Activated naive CD4-positive, alpha-beta T cell treated with anti-CD3 and anti-CD28 coated beads, Interleukin-2, amount 10 ng/mL, durations not matched to agents 7 days and 5 days (primary cell): ENCODE measurements at regions of chr1 and their contacts with region 1.

Region 1: GRCh38 chr1:161763522-161764098 is 2.5 kb upstream of the ATF6 start:
- DNase-seq: peak; percentile 64
- H3K4me3 Mint-ChIP-seq: peak overlapping the region; percentile 27
- H3K27ac Mint-ChIP-seq: peak overlapping the region; percentile 49
- H3K4me1 Mint-ChIP-seq: peaks cover 41% of the 10 kb centered on the region
- H3K27me3 Mint-ChIP-seq: no peaks in the 10 kb centered on the region

Region 2: GRCh38 chr1:161749509-161750407 is 13.9 kb before region 1 on chr1 and contains the start of gene DUSP12:
- CTCF ChIA-PET with region 1: interaction called, 13 read pairs
- DNase-seq: peak; percentile 91
- H3K4me3 Mint-ChIP-seq: peak within 1 kb of the TSS; percentile 98
- H3K27ac Mint-ChIP-seq: peak within 1 kb of the TSS; percentile 98
- H3K4me1 Mint-ChIP-seq: peaks cover 41% of the 10 kb centered on the region
- H3K27me3 Mint-ChIP-seq: peaks cover 11% of the 10 kb centered on the region